GM10248 (cell line): ENCODE measurements at regions of chr13 and their contacts with region 1.

Region 1: GRCh38 chr13:111474136-111475002 is 153.9 kb downstream of the TEX29 start:
- DNase-seq: peak; percentile 63
- CTCF ChIP-seq: peak; percentile 42

Region 2: DNA sequence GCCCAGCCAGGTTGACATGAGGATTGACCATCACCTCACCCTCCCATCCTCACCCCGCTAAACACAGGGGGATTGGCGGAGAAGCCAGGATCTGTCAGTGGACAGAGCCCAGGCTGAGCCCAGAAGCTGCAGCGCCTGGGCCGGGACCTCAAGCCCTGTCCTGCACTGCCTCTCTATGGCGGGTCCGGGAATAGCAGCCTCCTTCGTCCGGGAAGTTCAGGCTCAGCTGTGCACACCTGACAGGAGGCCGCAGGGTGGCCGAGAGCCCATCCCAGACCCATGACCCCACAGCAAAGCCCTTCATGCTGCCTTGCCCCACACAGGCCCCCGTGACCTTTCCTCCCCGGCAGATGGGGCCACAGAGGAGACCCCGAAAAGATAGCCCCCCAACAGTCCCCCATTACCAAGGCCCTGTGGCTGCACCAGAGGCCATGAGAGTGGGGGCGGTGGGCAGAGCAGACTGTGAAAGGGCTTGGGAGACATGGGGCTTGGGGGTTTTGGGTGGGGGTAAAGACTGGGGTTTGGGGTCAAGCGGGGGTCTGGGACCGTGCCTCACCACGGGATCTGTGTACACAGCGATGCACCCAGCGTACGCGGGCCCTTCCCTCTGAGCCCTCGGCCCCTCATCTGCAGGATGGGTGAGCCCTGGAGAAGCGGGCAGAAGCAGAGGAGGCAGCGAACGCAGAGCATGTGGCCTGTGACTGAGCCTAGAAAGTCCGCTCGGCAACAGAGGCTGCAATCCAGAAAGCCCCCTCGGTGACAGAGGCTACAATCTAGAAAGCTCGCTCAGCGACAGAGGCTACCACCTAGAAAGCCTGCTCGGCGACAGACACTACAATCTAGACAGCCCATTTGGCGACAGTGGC is 969.9 kb after region 1 on chr13:
- CTCF ChIA-PET with region 1: interaction called, 37 read pairs
- POLR2A ChIA-PET with region 1: no interaction called
- DNase-seq: peak; percentile 81
- CTCF ChIP-seq: peak; percentile 89